A673 (cell line): ENCODE measurements at regions of chr4 and their contacts with region 1.

Region 1: GRCh38 chr4:141346144-141346543 is 125.4 kb downstream of the ZNF330 start:
- DNase-seq: peak; percentile 65
- H3K4me3 ChIP-seq: no peak overlapping the region
- H3K27ac ChIP-seq: no peak overlapping the region
- H3K4me1 ChIP-seq: peaks cover 16% of the 10 kb centered on the region
- H3K27me3 ChIP-seq: peaks cover 26% of the 10 kb centered on the region
- CTCF ChIP-seq: peak; percentile 63

Region 2: GRCh38 chr4:141711014-141711610 is 365.0 kb after region 1 on chr4:
- CTCF ChIA-PET with region 1: interaction called, 3 read pairs
- POLR2A ChIA-PET with region 1: no interaction called
- intact Hi-C with region 1: loop called (anchors 2 kb)
- DNase-seq: peak; percentile 9
- H3K4me3 ChIP-seq: no peak overlapping the region
- H3K27ac ChIP-seq: no peak overlapping the region
- H3K4me1 ChIP-seq: no peaks in the 10 kb centered on the region
- H3K27me3 ChIP-seq: no peaks in the 10 kb centered on the region
- CTCF ChIP-seq: peak; percentile 57

Region 3: GRCh38 chr4:141807103-141807891 is 461.2 kb after region 1 on chr4:
- CTCF ChIA-PET with region 1: no interaction called
- POLR2A ChIA-PET with region 1: no interaction called
- intact Hi-C with region 1: loop called (anchors 5 kb)
- DNase-seq: no peak
- H3K4me3 ChIP-seq: no peak overlapping the region
- H3K27ac ChIP-seq: no peak overlapping the region
- H3K4me1 ChIP-seq: peaks cover 24% of the 10 kb centered on the region
- H3K27me3 ChIP-seq: peaks cover 3% of the 10 kb centered on the region
- CTCF ChIP-seq: no peak

Region 4: DNA sequence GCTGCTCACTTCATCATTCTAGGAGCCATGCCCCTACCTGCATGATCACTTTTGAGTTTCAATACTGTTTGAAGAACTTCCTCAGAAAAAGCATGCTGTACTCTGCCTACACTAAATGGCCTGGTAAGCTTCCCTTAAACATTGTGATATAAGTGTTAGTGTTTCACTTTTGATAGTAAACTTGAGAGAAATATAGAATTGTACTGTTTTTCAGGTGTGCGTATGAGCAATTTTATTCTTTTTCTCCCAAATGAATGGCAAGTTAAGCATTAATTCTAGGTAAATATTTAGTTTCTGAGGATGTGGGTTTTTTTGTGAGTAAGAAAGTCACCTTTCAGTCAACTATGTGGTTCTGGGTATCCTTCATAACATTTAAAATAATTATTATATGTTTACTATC is 774.8 kb after region 1 on chr4:
- CTCF ChIA-PET with region 1: no interaction called
- POLR2A ChIA-PET with region 1: no interaction called
- intact Hi-C with region 1: loop called (anchors 5 kb)
- DNase-seq: no peak
- H3K4me3 ChIP-seq: no peak overlapping the region
- H3K27ac ChIP-seq: no peak overlapping the region
- H3K4me1 ChIP-seq: peaks cover 17% of the 10 kb centered on the region
- H3K27me3 ChIP-seq: no peaks in the 10 kb centered on the region
- CTCF ChIP-seq: no peak